ENCODE measurements at regions of chr4 and their contacts with region 1.

Region 1: DNA sequence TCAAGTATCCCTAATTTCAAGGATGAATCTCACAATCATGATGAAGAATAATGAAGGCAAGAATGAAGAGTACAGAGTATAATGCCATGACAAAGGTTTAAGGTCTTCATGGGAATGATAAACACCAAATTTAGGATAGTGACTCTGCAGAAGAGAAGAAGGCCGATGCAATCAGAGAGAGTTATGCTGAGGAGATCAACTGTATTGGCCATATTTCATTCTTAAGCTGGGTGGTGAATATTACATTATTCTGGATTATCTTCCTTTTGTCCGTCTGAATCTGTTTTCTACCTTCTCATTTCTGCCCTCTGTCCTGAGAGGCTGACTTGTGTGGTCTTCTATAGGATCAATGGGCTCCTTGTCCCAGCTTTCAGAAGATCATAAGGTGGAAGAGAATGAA is 7.8 kb upstream of the METAP1 start:
- DNase-seq: no peak
- ATAC-seq: no peak
- H3K4me3 ChIP-seq: no peak overlapping the region
- H3K27ac ChIP-seq: no peak overlapping the region
- H3K4me1 ChIP-seq: no peaks in the 10 kb centered on the region
- H3K27me3 ChIP-seq: no peaks in the 10 kb centered on the region
- CTCF ChIP-seq: no peak

Region 2: GRCh38 chr4:98950925-98951324 is 36.8 kb before region 1 on chr4:
- CTCF ChIA-PET with region 1: no interaction called
- POLR2A ChIA-PET with region 1: no interaction called
- intact Hi-C with region 1: loop called (anchors 5 kb)
- DNase-seq: peak; percentile 50
- ATAC-seq: peak; percentile 74
- H3K4me3 ChIP-seq: no peak overlapping the region
- H3K27ac ChIP-seq: no peak overlapping the region
- H3K4me1 ChIP-seq: peaks cover 9% of the 10 kb centered on the region
- H3K27me3 ChIP-seq: no peaks in the 10 kb centered on the region
- CTCF ChIP-seq: no peak